Activated CD4-positive, alpha-beta memory T cell treated with anti-CD3 and anti-CD28 coated beads for 36 hours (primary cell): ENCODE measurements at regions of chr10 and their contacts with region 1.

Region 1: DNA sequence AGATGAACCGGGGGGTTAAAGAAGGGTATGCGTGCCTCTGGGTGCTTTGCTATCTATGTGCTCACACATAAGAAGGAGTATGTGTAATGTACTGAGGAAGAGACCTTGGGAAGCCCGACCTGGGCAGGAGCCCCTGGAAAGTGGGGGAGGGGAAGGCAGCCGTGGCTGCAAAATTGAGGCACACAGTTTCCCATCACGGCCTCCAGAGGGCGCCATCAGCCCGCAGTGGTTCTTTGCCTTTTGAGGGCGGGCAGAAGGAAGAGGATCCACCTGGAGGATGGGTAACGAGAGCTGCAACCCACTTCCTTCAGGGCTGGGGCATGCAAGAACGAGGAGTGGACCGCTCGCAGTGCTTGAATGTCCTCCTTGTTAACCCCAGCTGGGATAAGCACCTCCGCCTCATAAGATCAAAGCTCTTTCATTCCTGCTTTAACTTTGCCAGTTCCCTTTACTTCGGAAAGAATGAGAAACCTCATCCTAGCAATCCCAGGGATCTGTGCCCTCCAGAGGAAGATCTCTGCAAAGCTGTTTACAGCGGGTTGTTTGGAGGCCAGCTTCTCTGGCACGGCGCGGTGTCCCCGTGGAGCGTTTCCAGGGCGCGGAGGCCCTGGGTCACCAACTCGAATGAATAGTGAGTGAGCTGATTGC is 77.9 kb downstream of the PCGF5 start:
- DNase-seq: peak; percentile 89
- H3K4me3 Mint-ChIP-seq: peak overlapping the region; percentile 60
- H3K27ac Mint-ChIP-seq: no peak overlapping the region
- H3K4me1 Mint-ChIP-seq: peaks cover 8% of the 10 kb centered on the region
- H3K27me3 Mint-ChIP-seq: peaks cover 4% of the 10 kb centered on the region

Region 2: GRCh38 chr10:91287276-91287675 is 11.1 kb before region 1 on chr10:
- CTCF ChIA-PET with region 1: interaction called, 16 read pairs
- POLR2A ChIA-PET with region 1: no interaction called
- intact Hi-C with region 1: no loop called
- DNase-seq: no peak
- H3K4me3 Mint-ChIP-seq: no peak overlapping the region
- H3K27ac Mint-ChIP-seq: no peak overlapping the region
- H3K4me1 Mint-ChIP-seq: no peaks in the 10 kb centered on the region
- H3K27me3 Mint-ChIP-seq: no peaks in the 10 kb centered on the region

Region 3: GRCh38 chr10:91389636-91390512 is 91.5 kb after region 1 on chr10:
- CTCF ChIA-PET with region 1: interaction called, 19 read pairs
- POLR2A ChIA-PET with region 1: no interaction called
- intact Hi-C with region 1: loop called (anchors 2 kb)
- DNase-seq: no peak
- H3K4me3 Mint-ChIP-seq: no peak overlapping the region
- H3K27ac Mint-ChIP-seq: no peak overlapping the region
- H3K4me1 Mint-ChIP-seq: peaks cover 4% of the 10 kb centered on the region
- H3K27me3 Mint-ChIP-seq: peaks cover 17% of the 10 kb centered on the region

Region 4: DNA sequence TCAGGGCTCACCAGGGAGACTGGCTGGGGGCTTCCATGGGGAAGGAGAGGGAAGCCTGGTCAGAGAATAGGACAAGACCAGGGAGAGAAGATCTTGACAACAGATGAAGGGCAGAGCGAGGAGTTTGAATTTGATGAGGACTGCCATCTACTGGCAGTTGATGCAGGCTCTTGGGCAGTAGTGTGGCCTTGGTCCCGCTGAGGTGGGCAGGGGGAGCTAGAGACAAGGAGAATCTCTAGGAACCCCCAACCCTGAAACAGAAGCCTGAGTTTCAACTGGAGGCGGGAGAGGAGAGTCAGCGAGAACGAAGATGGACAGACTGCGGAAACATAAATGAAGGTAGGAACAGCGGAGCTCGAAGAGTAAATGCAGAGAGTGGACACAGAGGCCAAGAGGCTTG is 253.5 kb after region 1 on chr10:
- CTCF ChIA-PET with region 1: interaction called, 6 read pairs
- POLR2A ChIA-PET with region 1: no interaction called
- intact Hi-C with region 1: loop called (anchors 2 kb)
- DNase-seq: peak; percentile 15
- H3K4me3 Mint-ChIP-seq: no peak overlapping the region
- H3K27ac Mint-ChIP-seq: no peak overlapping the region
- H3K4me1 Mint-ChIP-seq: no peaks in the 10 kb centered on the region
- H3K27me3 Mint-ChIP-seq: no peaks in the 10 kb centered on the region

Region 5: GRCh38 chr10:91694170-91694794 is 395.9 kb after region 1 on chr10:
- CTCF ChIA-PET with region 1: interaction called, 51 read pairs
- POLR2A ChIA-PET with region 1: no interaction called
- intact Hi-C with region 1: loop called (anchors 2 kb)
- DNase-seq: no peak
- H3K4me3 Mint-ChIP-seq: no peak overlapping the region
- H3K27ac Mint-ChIP-seq: no peak overlapping the region
- H3K4me1 Mint-ChIP-seq: no peaks in the 10 kb centered on the region
- H3K27me3 Mint-ChIP-seq: peaks cover 7% of the 10 kb centered on the region